Naive thymus-derived CD4-positive, alpha-beta T cell (primary cell): ENCODE measurements at regions of chr14 and their contacts with region 1.

Region 1: DNA sequence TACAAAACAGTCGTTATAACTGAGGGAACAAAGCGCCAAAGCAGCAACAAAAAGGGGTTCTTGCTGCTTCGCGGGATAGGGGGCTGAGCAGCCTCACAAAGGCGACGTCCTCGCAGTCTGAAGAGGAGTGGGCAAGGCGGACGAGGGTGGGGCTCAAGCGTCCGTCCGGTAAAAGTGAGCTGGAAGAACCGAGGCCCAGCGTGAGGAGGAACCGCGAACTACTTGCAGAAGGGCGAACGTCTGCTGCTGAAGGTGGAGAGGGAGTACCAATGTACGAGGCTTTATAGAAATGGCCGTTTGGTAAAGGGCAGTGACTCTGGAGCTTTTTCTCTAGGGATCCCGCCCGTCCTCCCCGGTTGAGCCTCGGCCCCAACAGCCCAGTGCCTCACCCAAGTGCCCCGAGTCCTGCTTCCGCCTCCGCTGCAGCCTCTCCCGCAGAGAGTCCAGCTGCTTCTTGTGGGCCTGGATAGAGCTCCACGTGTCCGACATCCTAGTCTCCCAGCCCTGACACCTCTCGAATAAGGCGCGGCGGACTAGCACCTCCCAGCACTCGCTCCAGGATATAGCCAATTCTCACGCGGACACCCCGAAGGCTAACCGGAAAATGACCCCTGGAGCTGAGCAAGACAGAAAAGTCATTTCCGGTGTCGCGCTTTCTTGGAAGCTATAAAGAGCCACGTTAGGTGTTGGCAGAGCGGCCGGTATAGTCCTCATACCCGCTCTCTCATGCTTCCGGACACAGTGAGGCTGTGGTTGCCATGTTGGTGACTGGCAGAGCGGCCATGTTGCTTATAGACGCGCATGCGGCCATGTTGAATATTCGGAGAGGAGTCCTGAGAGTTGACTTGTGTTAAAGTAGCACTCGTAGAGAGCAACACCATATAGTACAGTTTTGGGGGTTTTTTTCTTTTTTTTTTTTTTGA is at the start of gene METTL3:
- DNase-seq: peak; percentile 78 to 95 (median 90)
- ATAC-seq: peak; percentile 100
- H3K4me3 ChIP-seq: peak within 1 kb of the TSS; percentile 94
- H3K4me3 Mint-ChIP-seq: peak within 1 kb of the TSS; percentile 92 to 100 (median 99)
- H3K27ac ChIP-seq: peak within 1 kb of the TSS; percentile 87
- H3K27ac Mint-ChIP-seq: peak within 1 kb of the TSS; percentile 97 to 99 (median 98)
- H3K4me1 ChIP-seq: peaks cover 15 to 21% of the 10 kb centered on the region in 2 donors
- H3K4me1 Mint-ChIP-seq: peaks cover 20 to 47% (median 42%) of the 10 kb centered on the region in 7 donors
- H3K27me3 ChIP-seq: no peaks in the 10 kb centered on the region
- H3K27me3 Mint-ChIP-seq: peaks cover 0 to 1% (median 0%) of the 10 kb centered on the region in 5 donors
- total RNA-seq, gene METTL3: 43.6 to 108 (median 75.3) TPM

Region 2: GRCh38 chr14:21220874-21221477 is 290.0 kb before region 1 on chr14:
- CTCF ChIA-PET with region 1: no interaction called
- POLR2A ChIA-PET with region 1: no interaction called
- intact Hi-C with region 1: no loop called
- DNase-seq: no peak
- ATAC-seq: no peak
- H3K4me3 ChIP-seq: no peak overlapping the region
- H3K4me3 Mint-ChIP-seq: peak overlapping the region in 9 of 10 donors; percentile 1 to 71 (median 53)
- H3K27ac ChIP-seq: peak overlapping the region; percentile 34
- H3K27ac Mint-ChIP-seq: peak overlapping the region; percentile 78 to 96 (median 86)
- H3K4me1 ChIP-seq: peaks cover 38 to 40% of the 10 kb centered on the region in 2 donors
- H3K4me1 Mint-ChIP-seq: peaks cover 43 to 87% (median 67%) of the 10 kb centered on the region in 7 donors
- H3K27me3 ChIP-seq: no peaks in the 10 kb centered on the region
- H3K27me3 Mint-ChIP-seq: no peaks in the 10 kb centered on the region

Region 3: GRCh38 chr14:21437063-21437901 is 73.7 kb before region 1 on chr14:
- CTCF ChIA-PET with region 1: interaction called, 3 read pairs
- POLR2A ChIA-PET with region 1: interaction called, 13 read pairs
- intact Hi-C with region 1: loop called (anchors 1 kb)
- DNase-seq: peak; percentile 93 to 100 (median 99)
- ATAC-seq: peak; percentile 100
- H3K4me3 ChIP-seq: peak overlapping the region; percentile 87
- H3K4me3 Mint-ChIP-seq: peak overlapping the region; percentile 86 to 97 (median 92)
- H3K27ac ChIP-seq: peak overlapping the region; percentile 94
- H3K27ac Mint-ChIP-seq: peak overlapping the region; percentile 90 to 98 (median 94)
- H3K4me1 ChIP-seq: peaks cover 13 to 22% of the 10 kb centered on the region in 2 donors
- H3K4me1 Mint-ChIP-seq: peaks cover 43 to 86% (median 68%) of the 10 kb centered on the region in 7 donors
- H3K27me3 ChIP-seq: no peaks in the 10 kb centered on the region
- H3K27me3 Mint-ChIP-seq: no peaks in the 10 kb centered on the region

Region 4: GRCh38 chr14:21476925-21477681 is 33.9 kb before region 1 on chr14 and contains the starts of genes RAB2B and TOX4:
- CTCF ChIA-PET with region 1: interaction called, 5 read pairs
- POLR2A ChIA-PET with region 1: interaction called, 40 read pairs
- intact Hi-C with region 1: loop called (anchors 1 kb)
- DNase-seq: peak; percentile 83 to 98 (median 97)
- ATAC-seq: peak; percentile 99
- H3K4me3 ChIP-seq: peak within 1 kb of the TSS; percentile 99
- H3K4me3 Mint-ChIP-seq: peak within 1 kb of the TSS; percentile 96 to 100 (median 99)
- H3K27ac ChIP-seq: peak within 1 kb of the TSS; percentile 88
- H3K27ac Mint-ChIP-seq: peak within 1 kb of the TSS; percentile 93 to 100 (median 98)
- H3K4me1 ChIP-seq: peaks cover 21 to 22% of the 10 kb centered on the region in 2 donors
- H3K4me1 Mint-ChIP-seq: peaks cover 18 to 74% (median 58%) of the 10 kb centered on the region in 7 donors
- H3K27me3 ChIP-seq: no peaks in the 10 kb centered on the region
- H3K27me3 Mint-ChIP-seq: no peaks in the 10 kb centered on the region
- total RNA-seq, gene RAB2B: 26.6 to 32.8 (median 30.5) TPM
- total RNA-seq, gene TOX4: 78.5 to 116 (median 86.5) TPM

Region 5: DNA sequence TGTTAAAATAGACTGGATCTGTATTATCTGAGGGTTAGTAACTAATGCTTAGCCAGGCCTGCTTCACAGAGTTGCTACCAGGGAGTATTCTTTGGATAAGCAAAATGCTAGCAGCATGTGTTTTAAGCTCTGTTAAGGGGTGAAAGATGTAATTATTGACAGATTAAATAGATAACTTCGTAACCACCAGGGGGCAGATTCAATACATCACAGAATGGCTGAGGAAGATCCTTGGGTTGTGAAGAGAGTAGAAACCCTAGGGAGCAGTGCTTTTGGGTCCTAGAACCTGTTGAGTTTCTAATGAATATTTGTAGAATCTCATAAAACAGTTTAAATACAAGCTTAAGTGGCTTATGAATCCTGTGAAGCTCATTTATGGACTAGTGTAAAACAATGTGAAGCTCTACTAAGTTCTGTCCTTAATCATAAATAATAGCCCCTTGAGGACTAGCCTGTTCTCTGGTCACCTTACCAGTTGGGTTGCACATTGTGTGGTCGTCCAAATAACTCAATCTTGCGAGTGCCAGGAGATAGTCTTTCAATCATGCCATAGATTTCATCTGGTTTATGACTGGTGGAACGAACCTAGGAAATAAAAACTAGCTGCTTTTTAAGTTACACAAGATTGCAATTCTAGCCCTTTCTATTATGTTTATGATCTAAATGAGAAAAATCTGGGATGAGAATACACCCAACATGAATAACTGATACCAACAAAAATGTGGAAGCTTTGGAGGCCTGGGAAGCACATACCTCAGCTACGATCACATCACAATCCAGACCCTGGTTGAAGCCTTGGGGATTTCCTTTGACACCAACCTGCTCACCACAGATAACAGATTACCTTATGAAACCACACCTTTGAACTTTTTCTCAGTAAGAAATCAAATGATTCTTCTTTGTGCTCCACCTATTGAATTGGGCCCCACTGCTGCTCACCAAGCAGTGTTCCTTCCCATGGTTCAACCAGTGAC is 12.2 kb before region 1 on chr14:
- CTCF ChIA-PET with region 1: interaction called, 18 read pairs
- POLR2A ChIA-PET with region 1: interaction called, 20 read pairs
- intact Hi-C with region 1: loop called (anchors 1 kb)
- DNase-seq: peak in 7 of 9 donors; percentile 35 to 68 (median 61)
- ATAC-seq: peak; percentile 87
- H3K4me3 ChIP-seq: no peak overlapping the region
- H3K4me3 Mint-ChIP-seq: peak overlapping the region in 8 of 10 donors; percentile 2 to 39 (median 24)
- H3K27ac ChIP-seq: peak overlapping the region; percentile 52
- H3K27ac Mint-ChIP-seq: peak overlapping the region; percentile 56 to 90 (median 79)
- H3K4me1 ChIP-seq: peaks cover 4 to 8% of the 10 kb centered on the region in 2 donors
- H3K4me1 Mint-ChIP-seq: peaks cover 14 to 39% (median 28%) of the 10 kb centered on the region in 7 donors
- H3K27me3 ChIP-seq: no peaks in the 10 kb centered on the region
- H3K27me3 Mint-ChIP-seq: no peaks in the 10 kb centered on the region

Region 6: GRCh38 chr14:21525962-21526671 is 15.1 kb after region 1 on chr14 and contains the start of gene SALL2:
- CTCF ChIA-PET with region 1: interaction called, 6 read pairs
- POLR2A ChIA-PET with region 1: interaction called, 42 read pairs
- intact Hi-C with region 1: loop called (anchors 1 to 2 kb)
- DNase-seq: peak in 8 of 9 donors; percentile 44 to 80 (median 60)
- ATAC-seq: peak; percentile 82
- H3K4me3 ChIP-seq: peak within 1 kb of the TSS; percentile 67
- H3K4me3 Mint-ChIP-seq: peak within 1 kb of the TSS; percentile 65 to 91 (median 88)
- H3K27ac ChIP-seq: peak within 1 kb of the TSS; percentile 75
- H3K27ac Mint-ChIP-seq: peak within 1 kb of the TSS; percentile 43 to 90 (median 81)
- H3K4me1 ChIP-seq: peaks cover 5 to 9% of the 10 kb centered on the region in 2 donors
- H3K4me1 Mint-ChIP-seq: peaks cover 10 to 27% (median 21%) of the 10 kb centered on the region in 7 donors
- H3K27me3 ChIP-seq: no peaks in the 10 kb centered on the region
- H3K27me3 Mint-ChIP-seq: peaks cover 0 to 11% (median 0%) of the 10 kb centered on the region in 5 donors
- total RNA-seq, gene SALL2: 2.3 to 8.3 (median 3.9) TPM